ENCODE measurements at regions of chr17 and their contacts with region 1.

Region 1: GRCh38 chr17:80791758-80792284 is 199.8 kb upstream of the CHMP6 start:
- DNase-seq: peak in 1 of 9 donors; percentile 58
- ATAC-seq: no peak
- H3K4me3 ChIP-seq: peak overlapping the region; percentile 37
- H3K4me3 Mint-ChIP-seq: peak overlapping the region; percentile 75 to 96 (median 88)
- H3K27ac ChIP-seq: peak overlapping the region; percentile 74
- H3K27ac Mint-ChIP-seq: peak overlapping the region; percentile 89 to 99 (median 96)
- H3K4me1 ChIP-seq: peaks cover 46 to 60% of the 10 kb centered on the region in 2 donors
- H3K4me1 Mint-ChIP-seq: peaks cover 51 to 93% (median 86%) of the 10 kb centered on the region in 7 donors
- H3K27me3 ChIP-seq: no peaks in the 10 kb centered on the region
- H3K27me3 Mint-ChIP-seq: no peaks in the 10 kb centered on the region

Region 2: GRCh38 chr17:79728226-79728907 is 1063.5 kb before region 1 on chr17:
- CTCF ChIA-PET with region 1: no interaction called
- POLR2A ChIA-PET with region 1: no interaction called
- intact Hi-C with region 1: no loop called
- DNase-seq: peak; percentile 62 to 91 (median 86)
- ATAC-seq: peak; percentile 91
- H3K4me3 ChIP-seq: peak overlapping the region; percentile 31
- H3K4me3 Mint-ChIP-seq: peak overlapping the region; percentile 53 to 85 (median 76)
- H3K27ac ChIP-seq: peak overlapping the region; percentile 56
- H3K27ac Mint-ChIP-seq: peak overlapping the region; percentile 72 to 92 (median 87)
- H3K4me1 ChIP-seq: peaks cover 4 to 12% of the 10 kb centered on the region in 2 donors
- H3K4me1 Mint-ChIP-seq: peaks cover 5 to 38% (median 21%) of the 10 kb centered on the region in 7 donors
- H3K27me3 ChIP-seq: no peaks in the 10 kb centered on the region
- H3K27me3 Mint-ChIP-seq: no peaks in the 10 kb centered on the region

Region 3: DNA sequence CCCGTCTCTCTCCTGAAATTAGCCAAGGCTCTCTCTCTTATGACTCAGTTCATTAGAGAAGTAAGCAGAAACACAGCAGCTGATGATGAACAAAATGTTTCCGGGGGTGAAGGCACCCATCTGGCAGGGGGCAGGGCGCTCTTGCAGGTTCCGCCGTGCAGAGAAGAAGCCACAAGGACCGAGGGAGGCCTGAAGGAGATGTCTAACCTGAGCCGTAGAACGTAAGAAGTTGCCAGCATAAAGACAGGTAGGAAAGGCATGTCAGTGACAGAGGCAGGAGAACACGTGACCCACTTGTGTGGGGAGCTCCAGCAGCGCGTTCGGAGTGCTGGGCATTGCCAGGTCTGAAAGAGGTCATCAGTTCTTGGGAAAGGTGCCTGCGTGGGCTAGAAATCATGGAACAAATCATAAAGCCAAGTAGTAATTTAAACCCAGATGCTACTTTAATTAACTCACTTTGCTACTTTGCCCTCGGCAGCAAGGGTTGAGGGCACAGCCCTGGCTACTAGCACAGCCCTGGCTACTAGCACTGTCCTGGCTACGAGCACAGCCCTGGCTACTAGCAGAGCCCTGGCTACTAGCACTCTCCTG is 48.5 kb before region 1 on chr17:
- CTCF ChIA-PET with region 1: no interaction called
- POLR2A ChIA-PET with region 1: interaction called, 4 read pairs
- intact Hi-C with region 1: loop called in 1 of 2 experiments (anchors 2 kb)
- DNase-seq: peak in 8 of 9 donors; percentile 40 to 82 (median 72)
- ATAC-seq: peak; percentile 75
- H3K4me3 ChIP-seq: peak overlapping the region; percentile 33
- H3K4me3 Mint-ChIP-seq: peak overlapping the region; percentile 80 to 93 (median 85)
- H3K27ac ChIP-seq: peak overlapping the region; percentile 74
- H3K27ac Mint-ChIP-seq: peak overlapping the region; percentile 83 to 95 (median 91)
- H3K4me1 ChIP-seq: peaks cover 0 to 61% of the 10 kb centered on the region in 2 donors
- H3K4me1 Mint-ChIP-seq: peaks cover 39 to 80% (median 69%) of the 10 kb centered on the region in 7 donors
- H3K27me3 ChIP-seq: no peaks in the 10 kb centered on the region
- H3K27me3 Mint-ChIP-seq: no peaks in the 10 kb centered on the region

Region 4: DNA sequence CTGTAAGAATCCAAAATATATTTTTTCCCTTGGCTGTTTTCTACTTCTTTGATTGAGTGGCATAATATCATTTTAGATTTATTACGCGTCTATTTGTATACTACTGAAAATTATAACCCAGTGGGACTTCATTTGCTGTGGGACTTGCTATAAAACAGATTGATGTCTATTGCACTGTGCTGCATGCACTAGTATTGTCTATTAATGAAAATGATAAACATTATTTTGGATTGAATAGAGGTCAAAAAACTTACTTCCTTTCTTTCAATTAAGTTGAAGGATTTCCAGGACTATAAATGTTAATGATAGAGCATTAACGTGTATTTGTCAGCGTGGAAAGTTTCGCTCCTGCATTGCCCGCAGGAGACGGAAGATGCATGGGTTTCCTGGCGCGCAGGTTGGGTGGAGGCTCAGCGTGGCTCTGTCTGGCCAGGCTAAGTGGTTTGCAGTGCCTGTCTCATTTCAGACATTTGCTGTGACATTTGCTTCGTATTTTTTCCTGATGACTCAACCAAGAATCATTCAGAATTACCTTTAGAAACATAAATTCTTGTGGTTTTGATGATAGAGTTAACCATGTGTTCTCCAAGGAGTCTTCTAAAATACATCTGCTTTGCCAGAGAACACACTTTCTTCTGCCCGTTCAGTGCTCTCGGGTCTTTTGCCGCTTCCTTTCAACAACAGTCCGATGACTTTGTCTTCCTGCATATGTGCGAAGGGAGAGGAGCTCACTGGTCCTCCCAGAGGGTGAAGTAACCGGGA is 30.5 kb before region 1 on chr17:
- CTCF ChIA-PET with region 1: interaction called, 5 read pairs
- POLR2A ChIA-PET with region 1: interaction called, 8 read pairs
- intact Hi-C with region 1: loop called (anchors 2 to 5 kb)
- DNase-seq: peak in 5 of 9 donors; percentile 34 to 73 (median 41)
- ATAC-seq: peak; percentile 45
- H3K4me3 ChIP-seq: peak overlapping the region; percentile 28
- H3K4me3 Mint-ChIP-seq: peak overlapping the region; percentile 60 to 84 (median 80)
- H3K27ac ChIP-seq: peak overlapping the region; percentile 81
- H3K27ac Mint-ChIP-seq: peak overlapping the region; percentile 87 to 98 (median 94)
- H3K4me1 ChIP-seq: peaks cover 34 to 68% of the 10 kb centered on the region in 2 donors
- H3K4me1 Mint-ChIP-seq: peaks cover 59 to 94% (median 84%) of the 10 kb centered on the region in 7 donors
- H3K27me3 ChIP-seq: no peaks in the 10 kb centered on the region
- H3K27me3 Mint-ChIP-seq: no peaks in the 10 kb centered on the region

Region 5: DNA sequence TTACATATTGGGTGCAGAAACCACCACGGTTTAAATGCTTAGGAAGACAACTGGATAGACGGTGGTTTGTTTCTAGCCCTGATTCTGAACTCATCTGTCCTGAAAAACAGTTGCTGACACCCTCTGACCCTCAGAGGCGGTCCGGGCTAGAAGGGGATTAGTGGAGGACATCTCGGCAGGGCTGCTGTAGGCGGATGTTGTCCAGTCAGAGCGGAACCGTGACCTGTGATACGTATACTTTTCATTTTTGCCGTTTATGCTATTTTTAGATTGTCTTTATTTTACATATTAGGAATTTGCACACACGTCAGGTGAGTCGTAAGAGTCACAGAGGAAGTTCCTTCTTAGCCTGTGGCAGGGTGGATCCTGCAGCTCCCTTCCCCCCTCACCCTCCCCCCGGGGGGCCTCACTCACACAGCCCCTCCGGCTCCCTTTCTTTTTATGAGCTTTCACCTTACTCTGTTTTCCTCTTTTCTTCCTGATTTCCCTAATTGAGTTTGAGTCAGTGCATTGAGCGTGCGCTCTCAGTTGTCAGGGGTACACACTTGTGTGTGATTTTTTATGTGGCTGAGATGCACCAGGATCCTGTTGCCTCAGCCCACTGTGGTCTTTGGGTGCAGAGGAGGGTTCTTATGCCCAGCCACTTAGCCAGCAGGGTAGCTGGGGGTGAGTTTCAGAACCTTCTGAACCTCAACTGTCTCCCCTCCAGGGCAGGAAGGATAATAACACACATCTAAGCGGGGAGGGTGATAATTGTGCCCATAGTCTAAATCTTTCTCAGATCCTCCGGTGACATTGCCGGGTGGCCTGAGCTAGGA is 11.2 kb before region 1 on chr17:
- CTCF ChIA-PET with region 1: interaction called, 3 read pairs
- POLR2A ChIA-PET with region 1: interaction called, 38 read pairs
- intact Hi-C with region 1: loop called (anchors 1 kb)
- DNase-seq: peak in 3 of 9 donors; percentile 29 to 57 (median 43)
- ATAC-seq: peak; percentile 40
- H3K4me3 ChIP-seq: peak overlapping the region; percentile 45
- H3K4me3 Mint-ChIP-seq: peak overlapping the region; percentile 62 to 96 (median 82)
- H3K27ac ChIP-seq: peak overlapping the region; percentile 70
- H3K27ac Mint-ChIP-seq: peak overlapping the region; percentile 87 to 99 (median 94)
- H3K4me1 ChIP-seq: peaks cover 38 to 57% of the 10 kb centered on the region in 2 donors
- H3K4me1 Mint-ChIP-seq: peaks cover 30 to 90% (median 77%) of the 10 kb centered on the region in 7 donors
- H3K27me3 ChIP-seq: no peaks in the 10 kb centered on the region
- H3K27me3 Mint-ChIP-seq: no peaks in the 10 kb centered on the region

Region 6: GRCh38 chr17:80832888-80833583 is 41.2 kb after region 1 on chr17:
- CTCF ChIA-PET with region 1: interaction called, 5 read pairs
- POLR2A ChIA-PET with region 1: interaction called, 7 read pairs
- intact Hi-C with region 1: loop called (anchors 1 kb)
- DNase-seq: peak; percentile 43 to 83 (median 67)
- ATAC-seq: peak; percentile 93
- H3K4me3 ChIP-seq: peak overlapping the region; percentile 36
- H3K4me3 Mint-ChIP-seq: peak overlapping the region; percentile 74 to 89 (median 88)
- H3K27ac ChIP-seq: peak overlapping the region; percentile 80
- H3K27ac Mint-ChIP-seq: peak overlapping the region; percentile 83 to 99 (median 94)
- H3K4me1 ChIP-seq: peaks cover 9 to 12% of the 10 kb centered on the region in 2 donors
- H3K4me1 Mint-ChIP-seq: peaks cover 13 to 67% (median 40%) of the 10 kb centered on the region in 7 donors
- H3K27me3 ChIP-seq: no peaks in the 10 kb centered on the region
- H3K27me3 Mint-ChIP-seq: no peaks in the 10 kb centered on the region